Gastrocnemius medialis (tissue), 4 donors: ENCODE measurements at regions of chr21 and their contacts with region 1.

Region 1: DNA sequence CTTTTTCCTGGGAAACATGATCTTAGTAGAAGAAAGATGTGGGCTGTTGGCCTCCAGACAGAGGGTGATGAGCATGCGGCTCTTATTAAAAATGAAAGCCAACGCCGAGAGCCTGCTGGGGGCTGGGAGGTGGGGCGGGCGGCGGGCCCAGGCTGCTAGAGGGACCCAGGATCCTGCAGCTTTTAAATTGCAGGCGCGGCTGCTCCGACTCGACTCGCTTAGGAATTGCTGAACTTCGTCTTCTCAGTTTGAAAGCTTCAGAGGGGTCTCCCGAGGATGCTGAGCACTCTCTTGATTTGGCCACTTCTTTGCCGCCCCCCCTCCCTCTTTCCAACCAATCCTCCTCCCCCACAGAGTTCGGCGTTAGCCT is 1.2 kb downstream of the AGPAT3 start:
- DNase-seq: peak; percentile 44 to 77
- ATAC-seq: peak; percentile 59 to 66
- H3K4me3 ChIP-seq: peak overlapping the region; percentile 57 to 76 (median 68)
- H3K27ac ChIP-seq: peak overlapping the region; percentile 87 to 96 (median 92)
- H3K4me1 ChIP-seq: peaks cover 44 to 47% of the 10 kb centered on the region in 2 donors
- H3K27me3 ChIP-seq: no peaks in the 10 kb centered on the region
- CTCF ChIP-seq: no peak
- POLR2A ChIP-seq: no peak

Region 2: GRCh38 chr21:43810505-43811261 is 55.6 kb before region 1 on chr21:
- in situ Hi-C with region 1: no loop called
- intact Hi-C with region 1: loop called (anchors 5 kb)
- DNase-seq: peak; percentile 72 to 89
- ATAC-seq: peak; percentile 75 to 80
- H3K4me3 ChIP-seq: peak overlapping the region in 2 of 4 donors; percentile 11 to 18
- H3K27ac ChIP-seq: peak overlapping the region in 2 of 4 donors; percentile 50
- H3K4me1 ChIP-seq: peaks cover 21% of the 10 kb centered on the region in 2 donors
- H3K27me3 ChIP-seq: no peaks in the 10 kb centered on the region
- CTCF ChIP-seq: peak; percentile 93 to 99 (median 97)
- POLR2A ChIP-seq: no peak

Region 3: DNA sequence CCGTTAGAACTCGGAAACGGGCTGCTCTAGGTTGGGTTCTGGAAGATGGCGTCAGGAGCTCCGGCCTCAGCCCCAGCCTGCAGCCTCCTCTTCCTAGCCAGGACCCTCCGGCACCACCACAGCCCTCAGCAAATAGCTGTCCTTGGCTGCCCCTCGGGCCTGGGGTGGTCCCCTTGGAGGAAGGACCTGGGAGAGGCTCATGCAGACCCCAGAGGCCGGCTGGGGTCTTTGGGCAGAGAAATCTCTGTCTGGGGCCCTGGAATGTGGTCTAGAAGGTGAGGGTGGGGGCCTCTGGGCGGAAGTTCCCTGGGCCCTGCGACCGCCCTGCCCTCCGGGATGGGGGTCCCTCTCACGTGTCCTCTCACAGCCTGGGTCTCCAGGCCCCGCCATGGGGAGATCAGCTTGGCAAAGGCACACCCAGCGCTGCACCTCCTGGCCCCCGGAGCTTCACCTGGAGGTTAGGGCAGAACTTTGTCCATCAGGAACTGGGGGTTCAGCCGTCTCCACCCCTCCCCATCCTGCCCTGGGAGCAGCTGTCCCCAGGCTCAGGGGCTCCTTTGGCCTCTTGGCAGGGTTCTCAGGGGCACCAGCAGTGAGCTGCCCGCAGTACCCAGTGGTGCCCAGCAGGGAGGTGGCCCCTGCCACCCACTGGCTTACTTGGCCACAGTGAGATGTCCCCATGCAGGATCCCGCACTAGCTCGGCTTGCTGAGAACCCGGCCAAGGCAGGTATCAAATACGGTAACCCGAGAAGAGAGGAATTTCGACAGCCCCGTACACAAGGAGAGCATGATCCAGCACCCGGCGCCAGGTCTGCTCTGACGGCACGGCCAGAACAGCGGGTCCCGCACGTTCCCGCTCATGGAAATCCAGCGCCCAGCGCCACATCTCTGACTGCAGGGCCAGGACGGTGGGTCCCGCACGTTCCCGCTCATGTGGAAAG is 40.3 kb before region 1 on chr21:
- in situ Hi-C with region 1: no loop called
- intact Hi-C with region 1: loop called (anchors 1 kb)
- DNase-seq: peak; percentile 91 to 96
- ATAC-seq: peak; percentile 88 to 91
- H3K4me3 ChIP-seq: peak overlapping the region in 2 of 4 donors; percentile 33 to 38
- H3K27ac ChIP-seq: peak overlapping the region; percentile 84 to 93 (median 91)
- H3K4me1 ChIP-seq: peaks cover 25 to 26% of the 10 kb centered on the region in 2 donors
- H3K27me3 ChIP-seq: peaks cover 0 to 5% (median 0%) of the 10 kb centered on the region in 3 donors
- CTCF ChIP-seq: peak; percentile 70 to 87 (median 82)
- POLR2A ChIP-seq: peak; percentile 34 to 52

Region 4: GRCh38 chr21:43880111-43880985 is 14.1 kb after region 1 on chr21:
- in situ Hi-C with region 1: no loop called
- intact Hi-C with region 1: loop called (anchors 2 kb)
- DNase-seq: peak; percentile 76 to 88
- ATAC-seq: peak; percentile 90 to 94
- H3K4me3 ChIP-seq: no peak overlapping the region
- H3K27ac ChIP-seq: peak overlapping the region; percentile 67 to 87 (median 82)
- H3K4me1 ChIP-seq: peaks cover 40 to 53% of the 10 kb centered on the region in 2 donors
- H3K27me3 ChIP-seq: no peaks in the 10 kb centered on the region
- CTCF ChIP-seq: peak in 1 of 5 experiments; percentile 15
- POLR2A ChIP-seq: peak in 1 of 2 donors; percentile 16

Region 5: GRCh38 chr21:43902441-43902840 is 36.2 kb after region 1 on chr21:
- in situ Hi-C with region 1: no loop called
- intact Hi-C with region 1: loop called (anchors 2 kb)
- DNase-seq: peak in 1 of 2 donors; percentile 52
- ATAC-seq: peak in 1 of 2 donors; percentile 20
- H3K4me3 ChIP-seq: no peak overlapping the region
- H3K27ac ChIP-seq: peak overlapping the region; percentile 79 to 90 (median 84)
- H3K4me1 ChIP-seq: peaks cover 27 to 33% of the 10 kb centered on the region in 2 donors
- H3K27me3 ChIP-seq: no peaks in the 10 kb centered on the region
- CTCF ChIP-seq: no peak
- POLR2A ChIP-seq: no peak

Region 6: DNA sequence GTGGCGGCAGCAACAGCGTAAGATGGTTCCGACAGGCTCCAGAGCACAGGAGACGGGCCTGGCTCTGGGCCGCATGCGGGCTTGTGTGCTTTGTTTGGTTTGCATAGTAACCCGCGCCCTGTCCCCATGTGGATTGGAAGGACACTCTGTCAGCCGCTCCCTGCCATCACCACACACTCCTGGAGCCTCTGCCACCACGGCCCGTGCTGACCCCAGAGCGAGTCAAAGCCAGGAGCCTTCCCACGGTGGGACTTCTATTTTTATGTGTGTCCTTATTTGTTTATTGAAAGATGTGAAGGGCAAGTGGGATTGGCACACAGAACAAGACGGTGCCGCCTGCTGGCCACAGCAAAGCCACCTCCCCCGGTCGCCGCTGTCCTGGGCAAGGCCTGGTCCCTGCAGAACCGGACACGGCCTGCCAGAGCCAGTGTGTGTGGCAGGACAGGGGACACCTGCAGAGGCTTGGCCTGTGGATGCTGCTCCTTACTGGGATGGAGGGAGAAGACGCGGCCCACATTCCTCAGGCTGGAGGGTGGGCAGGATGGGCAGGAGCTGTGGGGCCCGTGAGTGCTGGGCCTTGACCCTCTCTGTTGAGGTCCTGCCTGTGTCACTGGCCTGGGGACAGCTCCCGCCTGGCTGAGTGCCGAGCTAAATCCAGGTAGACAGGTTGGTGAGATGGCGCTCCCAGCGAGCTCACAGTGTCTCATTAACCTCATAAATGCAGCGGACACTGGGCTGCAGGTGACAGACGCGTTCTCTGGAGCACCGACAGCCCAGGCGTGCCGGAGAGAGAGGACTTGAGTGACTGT is 63.2 kb after region 1 on chr21:
- in situ Hi-C with region 1: no loop called
- intact Hi-C with region 1: loop called (anchors 2 kb)
- DNase-seq: peak; percentile 91 to 96
- ATAC-seq: peak; percentile 67 to 69
- H3K4me3 ChIP-seq: peak overlapping the region in 3 of 4 donors; percentile 25 to 29 (median 29)
- H3K27ac ChIP-seq: peak overlapping the region; percentile 94 to 98 (median 96)
- H3K4me1 ChIP-seq: peaks cover 50 to 81% of the 10 kb centered on the region in 2 donors
- H3K27me3 ChIP-seq: no peaks in the 10 kb centered on the region
- CTCF ChIP-seq: peak; percentile 41 to 58 (median 48)
- POLR2A ChIP-seq: peak; percentile 37 to 51

Region 7: DNA sequence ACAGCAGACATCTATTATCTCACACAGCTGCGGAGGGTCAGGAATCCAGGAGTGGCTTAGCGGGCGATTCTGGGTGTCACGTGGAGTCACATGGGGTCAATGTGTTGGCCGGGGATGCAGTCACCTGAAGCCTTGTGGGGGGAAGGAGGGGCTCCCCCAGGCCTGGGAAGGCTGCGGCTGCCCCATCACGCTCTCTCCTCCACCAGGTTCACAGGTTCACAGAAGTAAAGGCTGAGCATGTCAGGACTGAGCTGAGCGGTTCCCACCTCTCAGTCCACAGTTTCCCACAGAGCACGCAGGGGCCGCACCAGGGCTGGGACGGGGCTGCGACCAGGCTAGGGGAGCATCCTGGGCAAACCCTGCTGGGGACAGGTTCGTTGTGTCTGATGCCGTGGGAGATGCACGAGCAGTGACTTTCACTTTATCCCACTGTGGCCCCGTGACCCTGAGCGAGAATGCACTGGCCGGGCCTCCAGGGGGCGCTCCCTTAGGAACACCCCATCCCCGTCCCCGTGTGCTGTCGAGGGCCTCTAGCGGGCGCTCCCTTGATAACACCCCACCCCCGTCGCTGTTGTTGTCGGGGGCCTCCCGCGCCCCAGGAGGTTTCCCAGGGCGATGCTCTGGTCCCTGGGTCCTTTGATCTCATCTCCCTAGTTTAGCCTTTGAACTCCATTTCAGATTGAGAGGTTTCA is 72.7 kb after region 1 on chr21:
- in situ Hi-C with region 1: no loop called
- intact Hi-C with region 1: loop called (anchors 2 kb)
- DNase-seq: peak; percentile 61 to 82
- ATAC-seq: peak; percentile 68 to 70
- H3K4me3 ChIP-seq: peak overlapping the region; percentile 43 to 50 (median 47)
- H3K27ac ChIP-seq: peak overlapping the region; percentile 70 to 98 (median 85)
- H3K4me1 ChIP-seq: peaks cover 33 to 56% of the 10 kb centered on the region in 2 donors
- H3K27me3 ChIP-seq: no peaks in the 10 kb centered on the region
- CTCF ChIP-seq: peak; percentile 91 to 97 (median 94)
- POLR2A ChIP-seq: peak in 1 of 2 donors; percentile 33